Dendritic cell treated with granulocyte-macrophage colony-stimulating factor and Interleukin-4, amounts not matched to agents 40 ng/mL and 50 ng/mL, for 4 days (primary cell): ENCODE measurements at regions of chr7 and their contacts with region 1.

Region 1: DNA sequence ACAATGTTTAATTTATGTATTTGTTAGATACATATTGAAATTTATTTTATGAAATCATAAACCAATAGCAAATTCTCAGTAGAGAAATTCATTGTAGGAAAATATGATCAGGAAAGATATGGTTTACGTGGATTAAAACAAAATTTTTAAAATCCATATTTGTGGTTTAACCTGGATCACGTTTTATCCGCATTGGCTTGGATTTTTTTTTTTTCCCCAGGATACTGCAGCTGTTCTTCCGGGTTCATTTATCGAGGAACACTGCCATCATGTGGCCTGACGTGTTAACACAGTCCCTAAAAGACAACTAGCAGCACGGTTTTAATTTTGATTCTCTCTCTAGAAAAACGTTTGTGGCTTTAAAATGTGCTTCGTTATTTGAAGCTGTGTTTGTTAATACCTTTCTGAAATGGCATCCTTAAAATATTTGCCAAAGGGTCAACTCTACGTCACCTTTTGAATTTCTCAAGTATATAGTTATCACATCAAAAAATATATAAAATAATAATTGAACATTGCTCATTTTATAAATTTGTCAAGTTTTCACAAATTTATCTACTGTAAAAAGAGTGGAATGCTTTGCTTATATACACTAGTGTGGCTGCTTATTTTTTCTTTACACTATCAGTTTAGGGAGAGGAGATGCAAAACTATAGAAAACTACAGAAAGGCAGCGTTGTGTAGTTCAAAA is 8.7 kb upstream of the ASB4 start:
- H3K4me3 Mint-ChIP-seq: no peak overlapping the region
- H3K27ac Mint-ChIP-seq: no peak overlapping the region
- H3K4me1 Mint-ChIP-seq: no peaks in the 10 kb centered on the region
- H3K27me3 Mint-ChIP-seq: peaks cover 7% of the 10 kb centered on the region

Region 2: DNA sequence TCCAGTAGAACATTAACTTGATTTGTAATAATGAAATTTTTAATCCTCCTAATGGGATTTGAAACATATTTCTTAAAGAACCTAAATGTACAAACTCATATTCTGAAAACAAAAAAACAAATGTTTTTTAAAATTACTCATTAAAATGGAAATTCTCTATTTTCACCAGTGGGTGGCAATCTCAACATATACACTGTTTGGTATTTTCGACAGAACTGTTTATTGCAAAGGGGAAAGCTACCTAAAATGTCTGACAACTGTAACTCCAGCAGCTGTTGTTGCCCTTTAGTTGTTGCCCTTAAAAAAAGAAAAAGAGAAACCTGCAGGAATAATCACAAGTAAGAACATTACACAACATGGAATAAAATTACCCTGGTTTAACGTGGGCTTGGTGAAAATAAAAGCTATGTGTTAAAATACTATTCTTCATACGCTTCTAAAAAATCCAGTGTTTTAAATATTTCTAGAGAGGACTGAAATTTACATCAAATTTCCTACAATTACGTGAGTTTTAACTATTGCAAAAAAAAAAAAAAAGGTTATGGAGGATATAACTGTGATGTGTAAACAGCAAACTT is 1027.8 kb before region 1 on chr7:
- intact Hi-C with region 1: loop called (anchors 1 kb)
- H3K4me3 Mint-ChIP-seq: no peak overlapping the region
- H3K27ac Mint-ChIP-seq: no peak overlapping the region
- H3K4me1 Mint-ChIP-seq: peaks cover 6% of the 10 kb centered on the region
- H3K27me3 Mint-ChIP-seq: no peaks in the 10 kb centered on the region

Region 3: GRCh38 chr7:95126053-95126709 is 350.9 kb before region 1 on chr7:
- intact Hi-C with region 1: no loop called
- H3K4me3 Mint-ChIP-seq: no peak overlapping the region
- H3K27ac Mint-ChIP-seq: no peak overlapping the region
- H3K4me1 Mint-ChIP-seq: no peaks in the 10 kb centered on the region
- H3K27me3 Mint-ChIP-seq: no peaks in the 10 kb centered on the region

Region 4: DNA sequence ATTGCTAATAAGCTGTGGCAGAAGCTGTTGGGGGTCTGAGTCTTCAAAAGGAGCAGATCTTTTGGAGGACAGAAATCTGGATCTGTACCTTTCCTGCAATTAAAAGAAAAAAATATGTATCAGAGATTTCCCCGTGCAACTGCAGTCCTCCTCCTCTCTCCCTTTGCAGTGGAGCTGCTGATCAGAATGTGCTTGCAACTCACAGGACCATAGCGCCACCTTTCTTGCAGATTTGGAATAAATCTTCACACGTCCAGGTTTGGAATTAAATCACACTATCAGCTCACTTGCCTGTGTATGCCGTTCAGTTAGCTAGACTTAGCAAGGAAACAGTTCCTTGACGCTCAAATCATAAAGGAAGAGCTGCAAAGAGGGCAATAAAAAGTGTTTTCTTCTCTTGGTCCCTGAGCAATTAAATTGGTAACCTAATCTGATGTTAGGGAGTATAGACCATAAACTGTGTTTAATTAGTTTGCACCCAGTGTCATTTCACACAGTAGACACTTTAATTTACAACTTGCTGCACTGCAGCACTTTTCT is 230.1 kb before region 1 on chr7:
- intact Hi-C with region 1: loop called (anchors 10 kb)
- H3K4me3 Mint-ChIP-seq: no peak overlapping the region
- H3K27ac Mint-ChIP-seq: no peak overlapping the region
- H3K4me1 Mint-ChIP-seq: no peaks in the 10 kb centered on the region
- H3K27me3 Mint-ChIP-seq: no peaks in the 10 kb centered on the region

Region 5: GRCh38 chr7:95511716-95512260 is 34.7 kb after region 1 on chr7:
- intact Hi-C with region 1: no loop called
- H3K4me3 Mint-ChIP-seq: no peak overlapping the region
- H3K27ac Mint-ChIP-seq: no peak overlapping the region
- H3K4me1 Mint-ChIP-seq: no peaks in the 10 kb centered on the region
- H3K27me3 Mint-ChIP-seq: no peaks in the 10 kb centered on the region